ENCODE measurements at regions of chr19 and their contacts with region 1.

Region 1: DNA sequence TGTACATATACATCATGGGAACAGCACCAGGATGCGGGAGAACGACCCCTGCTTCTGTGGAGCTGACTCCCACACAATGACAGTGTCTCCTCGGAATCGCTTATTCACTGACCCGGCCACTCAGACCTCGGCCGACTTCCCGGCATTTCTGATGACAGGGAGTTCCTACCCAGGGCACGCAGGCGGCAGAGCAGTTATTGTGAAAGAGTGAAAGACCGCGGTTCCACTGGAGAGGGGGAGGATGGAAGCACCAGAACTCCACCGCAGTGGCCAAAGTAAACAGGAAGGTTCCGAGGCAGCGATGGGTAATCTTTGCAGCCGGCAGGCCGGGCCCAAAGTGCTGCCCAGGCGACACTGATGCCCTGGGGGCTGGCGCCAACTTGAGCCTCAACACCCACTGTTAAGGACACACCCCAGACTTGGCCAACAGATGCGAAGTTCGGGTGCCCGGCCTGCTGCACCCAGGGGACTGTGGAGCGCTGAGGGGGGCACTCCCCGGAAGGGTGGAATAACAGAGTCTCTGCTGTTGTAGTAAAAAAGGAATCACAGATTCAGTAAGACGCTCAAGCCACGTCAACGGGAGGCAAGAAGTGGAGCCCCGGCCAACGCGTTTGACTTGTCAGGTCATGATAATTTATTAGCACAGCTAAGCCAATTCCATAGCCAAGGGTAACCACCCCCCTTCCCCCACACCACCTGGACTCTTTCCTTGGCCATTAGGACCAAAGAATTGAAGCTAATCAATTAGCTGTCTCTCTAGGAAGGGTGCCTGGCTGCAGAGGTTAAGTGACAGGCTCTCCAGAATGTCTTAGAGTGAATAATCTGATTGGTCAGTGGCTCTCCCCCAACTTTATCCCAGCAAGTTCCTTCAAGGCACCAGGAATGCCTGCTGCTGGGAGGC is 5.8 kb downstream of the MLLT1 start:
- DNase-seq: peak; percentile 83
- H3K4me3 ChIP-seq: peak overlapping the region in 1 of 3 experiments; percentile 0
- H3K27ac ChIP-seq: peak overlapping the region; percentile 90
- H3K4me1 ChIP-seq: peaks cover 80% of the 10 kb centered on the region
- H3K27me3 ChIP-seq: no peaks in the 10 kb centered on the region
- CTCF ChIP-seq: no peak
- POLR2A ChIP-seq: no peak

Region 2: DNA sequence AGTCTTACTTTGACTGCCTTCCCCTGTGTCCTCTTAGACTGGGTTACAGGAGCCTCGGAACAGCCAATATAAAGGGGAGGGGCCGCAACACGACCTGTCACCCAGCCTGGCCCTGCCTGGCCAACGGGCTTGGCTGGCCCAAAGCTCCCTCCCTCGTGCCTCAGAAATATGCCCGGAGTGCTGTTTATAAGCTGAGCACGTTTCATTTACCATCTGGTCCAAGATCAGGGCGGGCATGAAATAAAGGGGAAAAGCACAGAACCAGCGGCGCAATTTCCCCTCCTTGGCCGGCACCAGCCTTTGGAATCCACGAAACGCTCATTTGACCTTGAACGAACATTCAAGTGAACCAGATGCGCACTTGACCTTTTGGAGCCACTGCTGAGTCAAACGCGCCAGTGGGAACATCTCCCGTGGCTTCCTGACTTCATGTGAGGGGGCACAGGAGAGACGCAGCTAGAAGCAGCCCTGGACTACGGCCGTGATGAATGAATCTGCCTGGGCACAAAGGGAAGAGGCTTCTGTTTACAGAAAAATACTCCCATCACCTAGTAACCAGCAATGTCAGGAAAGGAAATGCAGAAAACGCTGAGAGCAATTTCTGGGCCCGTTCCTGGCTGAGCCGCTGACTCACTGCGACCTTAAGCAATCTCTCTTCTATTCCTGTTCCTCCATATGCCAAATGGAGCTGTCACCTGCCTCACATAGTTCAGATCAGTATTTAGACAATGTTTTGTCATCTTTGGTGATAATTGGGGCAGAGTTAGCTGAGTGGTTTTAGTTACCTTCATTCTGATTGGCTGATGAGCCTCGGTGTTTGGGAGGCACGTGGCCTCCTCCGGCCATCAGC is 216.9 kb before region 1 on chr19:
- CTCF ChIA-PET with region 1: no interaction called
- POLR2A ChIA-PET with region 1: no interaction called
- dilution Hi-C with region 1: no loop called
- intact Hi-C with region 1: loop called (anchors 5 kb)
- DNase-seq: peak; percentile 98
- H3K4me3 ChIP-seq: no peak overlapping the region
- H3K27ac ChIP-seq: peak overlapping the region; percentile 97
- H3K4me1 ChIP-seq: peaks cover 43% of the 10 kb centered on the region
- H3K27me3 ChIP-seq: no peaks in the 10 kb centered on the region
- CTCF ChIP-seq: no peak
- POLR2A ChIP-seq: no peak

Region 3: GRCh38 chr19:6183374-6183773 is 90.6 kb before region 1 on chr19:
- CTCF ChIA-PET with region 1: no interaction called
- POLR2A ChIA-PET with region 1: no interaction called
- dilution Hi-C with region 1: no loop called
- intact Hi-C with region 1: no loop called
- DNase-seq: no peak
- H3K4me3 ChIP-seq: no peak overlapping the region
- H3K27ac ChIP-seq: no peak overlapping the region
- H3K4me1 ChIP-seq: no peaks in the 10 kb centered on the region
- H3K27me3 ChIP-seq: peaks cover 5 to 6% of the 10 kb centered on the region in 2 experiments
- CTCF ChIP-seq: no peak
- POLR2A ChIP-seq: no peak

Region 4: DNA sequence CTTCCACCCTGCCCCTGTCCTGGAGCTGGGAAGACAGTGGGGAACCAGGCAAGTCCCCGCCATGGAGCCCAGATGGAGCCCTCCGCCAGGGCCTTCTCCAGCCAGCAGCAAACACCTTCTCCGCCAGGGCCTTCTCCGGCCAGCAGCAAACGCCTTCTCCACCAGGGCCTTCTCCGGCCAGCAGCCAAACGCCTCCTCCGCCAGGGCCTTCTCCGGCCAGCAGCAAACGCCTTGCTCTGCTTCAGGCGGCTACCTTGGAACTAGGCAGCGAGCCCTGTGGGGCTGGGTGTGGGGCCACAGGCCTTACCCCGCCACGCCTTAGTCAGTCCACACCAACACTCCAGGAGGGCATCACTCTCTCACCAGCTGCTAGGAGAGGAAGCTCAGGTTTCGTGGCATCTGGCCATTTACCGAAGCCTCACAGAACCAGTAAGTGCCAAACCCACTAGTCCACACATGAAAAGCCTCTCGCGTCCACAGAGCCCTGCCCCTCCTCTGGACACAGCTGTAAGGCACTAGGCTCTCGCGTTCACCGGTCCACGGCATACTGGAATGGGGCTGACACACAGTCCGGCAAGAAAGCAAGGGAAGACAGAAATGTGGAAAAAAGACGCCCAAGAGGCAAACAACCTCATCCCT is 35.2 kb before region 1 on chr19:
- CTCF ChIA-PET with region 1: interaction called, 23 read pairs
- POLR2A ChIA-PET with region 1: interaction called, 3 read pairs
- dilution Hi-C with region 1: no loop called
- intact Hi-C with region 1: loop called (anchors 1 kb)
- DNase-seq: no peak
- H3K4me3 ChIP-seq: no peak overlapping the region
- H3K27ac ChIP-seq: peak overlapping the region; percentile 99
- H3K4me1 ChIP-seq: peaks cover 68% of the 10 kb centered on the region
- H3K27me3 ChIP-seq: no peaks in the 10 kb centered on the region
- CTCF ChIP-seq: no peak
- POLR2A ChIP-seq: no peak

Region 5: GRCh38 chr19:6260912-6261650 is 12.9 kb before region 1 on chr19:
- CTCF ChIA-PET with region 1: interaction called, 25 read pairs
- POLR2A ChIA-PET with region 1: interaction called, 3 read pairs
- dilution Hi-C with region 1: no loop called
- intact Hi-C with region 1: no loop called
- DNase-seq: peak; percentile 44
- H3K4me3 ChIP-seq: no peak overlapping the region
- H3K27ac ChIP-seq: no peak overlapping the region
- H3K4me1 ChIP-seq: no peaks in the 10 kb centered on the region
- H3K27me3 ChIP-seq: no peaks in the 10 kb centered on the region
- CTCF ChIP-seq: peak; percentile 59 to 76
- POLR2A ChIP-seq: no peak

Region 6: GRCh38 chr19:6424939-6425731 is 151.2 kb after region 1 on chr19:
- CTCF ChIA-PET with region 1: no interaction called
- POLR2A ChIA-PET with region 1: no interaction called
- dilution Hi-C with region 1: no loop called
- intact Hi-C with region 1: no loop called
- DNase-seq: peak; percentile 100
- H3K4me3 ChIP-seq: no peak overlapping the region
- H3K27ac ChIP-seq: no peak overlapping the region
- H3K4me1 ChIP-seq: peaks cover 8% of the 10 kb centered on the region
- H3K27me3 ChIP-seq: no peaks in the 10 kb centered on the region
- CTCF ChIP-seq: no peak
- POLR2A ChIP-seq: peak; percentile 41

Region 7: GRCh38 chr19:6442087-6442688 is 168.2 kb after region 1 on chr19:
- CTCF ChIA-PET with region 1: no interaction called
- POLR2A ChIA-PET with region 1: no interaction called
- dilution Hi-C with region 1: no loop called
- intact Hi-C with region 1: no loop called
- DNase-seq: no peak
- H3K4me3 ChIP-seq: no peak overlapping the region
- H3K27ac ChIP-seq: no peak overlapping the region
- H3K4me1 ChIP-seq: no peaks in the 10 kb centered on the region
- H3K27me3 ChIP-seq: no peaks in the 10 kb centered on the region
- CTCF ChIP-seq: no peak
- POLR2A ChIP-seq: no peak

Region 8: GRCh38 chr19:6736169-6736916 is 462.4 kb after region 1 on chr19:
- CTCF ChIA-PET with region 1: no interaction called
- POLR2A ChIA-PET with region 1: no interaction called
- dilution Hi-C with region 1: no loop called
- intact Hi-C with region 1: no loop called
- DNase-seq: peak; percentile 84
- H3K4me3 ChIP-seq: peak overlapping the region; percentile 49 to 99 (median 95)
- H3K27ac ChIP-seq: peak overlapping the region; percentile 88
- H3K4me1 ChIP-seq: peaks cover 44% of the 10 kb centered on the region
- H3K27me3 ChIP-seq: no peaks in the 10 kb centered on the region
- CTCF ChIP-seq: peak; percentile 60 to 71
- POLR2A ChIP-seq: no peak